ENCODE measurements at regions of chr9 and their contacts with region 1.

Region 1: DNA sequence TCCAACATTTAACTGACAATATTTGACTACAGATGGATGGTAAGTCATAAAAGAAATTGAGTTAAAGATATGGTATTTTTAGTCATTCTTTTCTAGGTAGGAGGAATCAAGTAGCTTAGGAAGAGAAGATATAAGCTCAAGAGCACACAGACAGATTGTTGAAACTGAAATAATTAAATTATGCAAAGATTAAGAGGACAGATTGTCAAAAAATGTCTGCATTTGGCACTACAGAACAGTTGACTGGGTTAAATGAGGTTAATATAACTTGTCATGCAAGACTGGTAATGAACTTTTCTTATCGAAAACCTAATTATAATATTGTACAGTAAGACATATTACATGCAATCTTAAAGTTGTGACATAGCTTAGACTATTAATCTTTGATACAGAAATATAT is 36.3 kb upstream of the TRPM3 start:
- DNase-seq: no peak

Region 2: GRCh38 chr9:69877854-69878514 is 1279.7 kb before region 1 on chr9:
- intact Hi-C with region 1: no loop called
- DNase-seq: no peak

Region 3: DNA sequence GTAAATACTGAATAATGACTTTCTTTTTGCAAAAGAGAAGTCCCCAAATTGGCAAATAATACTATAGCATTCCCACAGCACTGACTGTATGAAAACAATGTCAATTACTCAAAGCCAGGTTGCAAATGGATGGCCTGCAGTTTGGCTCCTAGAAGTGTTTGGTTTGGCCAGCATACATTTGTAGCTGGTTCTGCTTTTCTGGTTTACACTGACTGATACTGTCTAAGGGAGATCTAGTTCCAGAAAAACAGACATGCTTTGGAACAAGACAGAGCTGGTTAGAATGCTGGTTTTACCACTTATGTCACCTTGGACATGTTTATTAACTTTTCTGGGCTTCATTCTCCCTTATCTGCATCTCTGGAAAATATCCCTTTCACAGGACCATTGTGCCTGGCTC is 45.2 kb after region 1 on chr9:
- intact Hi-C with region 1: no loop called
- DNase-seq: no peak

Region 4: DNA sequence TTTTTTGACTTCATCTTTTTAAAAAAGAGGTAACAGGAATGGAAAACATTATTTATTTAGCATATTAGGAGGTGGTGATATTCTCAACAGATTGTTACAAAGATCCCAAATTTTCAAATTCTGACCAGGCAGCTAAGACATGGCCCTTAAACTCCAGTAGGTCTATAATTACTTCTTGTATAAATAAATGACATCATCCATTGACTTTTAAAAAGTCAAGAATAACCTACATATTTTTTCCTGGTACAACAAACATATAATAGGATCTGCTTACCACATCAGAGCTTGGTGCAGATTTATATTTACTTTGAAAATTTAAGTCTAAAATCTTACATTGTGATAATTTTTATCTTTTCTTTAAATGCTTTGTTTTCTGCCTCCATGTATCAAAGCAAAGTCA is 55.9 kb after region 1 on chr9:
- intact Hi-C with region 1: loop called in 1 of 2 experiments (anchors 2 kb)
- DNase-seq: no peak

Region 5: DNA sequence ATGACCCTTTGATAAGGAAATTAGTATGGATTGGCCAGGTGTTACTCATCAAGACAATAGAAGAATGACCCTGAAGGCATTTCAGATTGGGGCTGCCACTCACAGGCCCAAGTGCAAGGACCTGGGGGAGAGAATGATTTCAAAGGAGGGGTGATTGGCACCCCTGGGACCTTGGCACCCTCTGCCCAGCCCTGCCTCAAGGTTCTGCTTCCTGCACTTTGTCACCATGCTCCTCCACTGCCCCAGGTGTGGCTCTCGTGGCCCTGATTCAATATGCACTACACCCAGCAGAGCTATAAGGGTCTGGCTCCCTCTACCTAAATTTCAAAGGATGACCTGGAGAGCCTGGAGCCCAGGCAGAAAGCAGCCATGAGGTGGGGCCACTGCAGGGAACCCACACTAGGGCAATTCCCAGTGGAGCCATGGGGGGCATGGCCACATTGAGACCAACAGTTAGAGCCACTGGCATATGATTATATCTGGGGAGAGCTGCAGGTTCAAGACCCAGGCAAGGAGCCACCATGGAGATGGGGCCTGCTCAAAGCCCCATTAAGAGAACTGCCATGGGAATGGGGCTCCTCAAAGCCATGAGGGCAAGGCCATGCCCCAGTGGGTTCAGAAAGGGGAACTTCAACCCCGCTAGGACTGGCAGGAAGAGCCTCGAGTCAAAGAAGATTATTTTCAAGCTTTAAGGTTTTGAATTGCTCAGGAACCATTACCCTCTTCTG is 517.6 kb after region 1 on chr9:
- intact Hi-C with region 1: no loop called
- DNase-seq: no peak